ENCODE measurements at regions of chr3 and their contacts with region 1.

Region 1: GRCh38 chr3:33883538-33883950 is 85.1 kb downstream of the PDCD6IP start:
- DNase-seq: peak in 5 of 35 experiments; percentile 3 to 69 (median 19)
- ATAC-seq: peak in 1 of 4 experiments; percentile 38
- H3K4me3 ChIP-seq: no peak overlapping the region
- H3K4me3 Mint-ChIP-seq: peak overlapping the region in 1 of 3 donors; percentile 21
- H3K27ac ChIP-seq: no peak overlapping the region
- H3K27ac Mint-ChIP-seq: no peak overlapping the region
- H3K4me1 ChIP-seq: peaks cover 0 to 7% of the 10 kb centered on the region in 2 experiments
- H3K4me1 Mint-ChIP-seq: peaks cover 4 to 6% (median 4%) of the 10 kb centered on the region in 3 donors
- H3K27me3 ChIP-seq: no peaks in the 10 kb centered on the region
- H3K27me3 Mint-ChIP-seq: peaks cover 3 to 5% of the 10 kb centered on the region in 2 donors

Region 2: DNA sequence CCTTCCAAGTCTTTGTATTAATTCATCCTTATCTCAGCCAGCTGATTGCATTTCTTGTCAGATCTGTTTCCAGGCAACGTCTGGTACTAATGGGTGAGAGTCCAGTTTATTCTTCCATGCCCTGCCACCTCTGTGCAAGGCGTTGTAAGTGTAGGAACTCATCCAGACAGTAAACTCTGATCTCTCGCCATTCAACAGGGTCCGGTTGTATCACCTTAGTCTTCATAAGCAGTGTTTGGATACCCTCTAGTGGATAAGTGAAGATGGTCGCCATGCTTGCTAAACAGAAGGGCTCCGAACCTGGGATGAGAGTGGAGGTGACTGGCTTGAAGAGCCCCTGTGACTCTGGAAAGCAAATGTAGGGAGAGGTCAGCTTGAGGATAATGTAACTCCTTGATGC is 1543.5 kb before region 1 on chr3:
- CTCF ChIA-PET with region 1: no interaction called
- POLR2A ChIA-PET with region 1: no interaction called
- DNase-seq: peak in 19 of 35 experiments; percentile 2 to 70 (median 11)
- ATAC-seq: peak; percentile 61 to 85 (median 73)
- H3K4me3 ChIP-seq: no peak overlapping the region
- H3K4me3 Mint-ChIP-seq: no peak overlapping the region
- H3K27ac ChIP-seq: no peak overlapping the region
- H3K27ac Mint-ChIP-seq: no peak overlapping the region
- H3K4me1 ChIP-seq: peaks cover 11 to 18% of the 10 kb centered on the region in 2 experiments
- H3K4me1 Mint-ChIP-seq: peaks cover 27 to 34% (median 31%) of the 10 kb centered on the region in 3 donors
- H3K27me3 ChIP-seq: no peaks in the 10 kb centered on the region
- H3K27me3 Mint-ChIP-seq: no peaks in the 10 kb centered on the region

Region 3: GRCh38 chr3:34683851-34684250 is 800.3 kb after region 1 on chr3:
- CTCF ChIA-PET with region 1: interaction called, 18 to 38 read pairs
- POLR2A ChIA-PET with region 1: no interaction called
- DNase-seq: peak in 23 of 35 experiments; percentile 1 to 43 (median 14)
- ATAC-seq: no peak
- H3K4me3 ChIP-seq: no peak overlapping the region
- H3K4me3 Mint-ChIP-seq: no peak overlapping the region
- H3K27ac ChIP-seq: no peak overlapping the region
- H3K27ac Mint-ChIP-seq: no peak overlapping the region
- H3K4me1 ChIP-seq: no peaks in the 10 kb centered on the region
- H3K4me1 Mint-ChIP-seq: no peaks in the 10 kb centered on the region
- H3K27me3 ChIP-seq: no peaks in the 10 kb centered on the region
- H3K27me3 Mint-ChIP-seq: no peaks in the 10 kb centered on the region